PC-3 (cell line): ENCODE measurements at regions of chrX and their contacts with region 1.

Region 1: GRCh38 chrX:95703696-95704095 is 980.9 kb upstream of the DIAPH2 start:
- DNase-seq: no peak
- ATAC-seq: no peak
- H3K4me3 ChIP-seq: no peak overlapping the region
- H3K27ac ChIP-seq: no peak overlapping the region
- H3K4me1 ChIP-seq: no peaks in the 10 kb centered on the region
- H3K27me3 ChIP-seq: no peaks in the 10 kb centered on the region
- CTCF ChIP-seq: no peak

Region 2: DNA sequence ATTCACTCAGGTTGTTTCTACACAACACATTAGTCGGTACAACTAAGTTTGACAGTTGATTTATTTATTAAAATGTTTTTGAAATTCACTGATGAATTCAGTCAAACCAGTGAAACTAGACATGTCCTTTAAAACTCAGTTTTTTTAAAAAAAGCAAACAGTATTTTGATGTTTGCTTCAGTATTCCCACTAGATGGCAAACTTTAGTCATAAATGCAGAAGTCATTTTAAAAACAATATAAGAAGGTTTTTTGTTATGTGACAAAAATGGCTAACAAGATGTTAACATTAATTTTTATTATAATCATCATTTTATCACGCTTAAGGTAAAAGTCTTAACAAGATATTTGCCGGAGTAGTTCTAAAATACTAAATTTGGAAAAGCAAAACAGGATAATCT is 356.8 kb before region 1 on chrX:
- CTCF ChIA-PET with region 1: no interaction called
- POLR2A ChIA-PET with region 1: no interaction called
- intact Hi-C with region 1: loop called (anchors 10 kb)
- DNase-seq: peak; percentile 17
- ATAC-seq: no peak
- H3K4me3 ChIP-seq: no peak overlapping the region
- H3K27ac ChIP-seq: no peak overlapping the region
- H3K4me1 ChIP-seq: no peaks in the 10 kb centered on the region
- H3K27me3 ChIP-seq: no peaks in the 10 kb centered on the region
- CTCF ChIP-seq: peak; percentile 56

Region 3: DNA sequence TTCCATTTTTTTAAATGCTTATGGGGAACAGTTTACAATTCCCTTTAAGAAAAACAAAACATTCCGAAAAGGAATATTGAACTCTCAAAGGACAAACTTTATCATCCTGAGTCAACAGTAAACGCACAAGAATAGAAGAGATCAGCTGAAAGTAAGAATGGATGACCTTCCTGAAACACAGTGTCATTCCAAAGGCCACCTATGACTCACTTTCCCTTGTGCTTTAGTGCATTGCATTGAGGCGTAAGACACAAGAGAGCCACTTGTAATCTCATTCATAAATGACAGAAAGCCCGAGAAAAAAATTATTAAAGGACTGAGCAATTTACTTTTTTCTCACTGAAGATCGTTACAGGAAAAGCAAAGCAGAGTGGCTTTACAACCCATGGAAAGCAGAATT is 81.5 kb before region 1 on chrX:
- CTCF ChIA-PET with region 1: no interaction called
- POLR2A ChIA-PET with region 1: no interaction called
- intact Hi-C with region 1: no loop called
- DNase-seq: no peak
- ATAC-seq: no peak
- H3K4me3 ChIP-seq: no peak overlapping the region
- H3K27ac ChIP-seq: no peak overlapping the region
- H3K4me1 ChIP-seq: no peaks in the 10 kb centered on the region
- H3K27me3 ChIP-seq: no peaks in the 10 kb centered on the region
- CTCF ChIP-seq: no peak

Region 4: DNA sequence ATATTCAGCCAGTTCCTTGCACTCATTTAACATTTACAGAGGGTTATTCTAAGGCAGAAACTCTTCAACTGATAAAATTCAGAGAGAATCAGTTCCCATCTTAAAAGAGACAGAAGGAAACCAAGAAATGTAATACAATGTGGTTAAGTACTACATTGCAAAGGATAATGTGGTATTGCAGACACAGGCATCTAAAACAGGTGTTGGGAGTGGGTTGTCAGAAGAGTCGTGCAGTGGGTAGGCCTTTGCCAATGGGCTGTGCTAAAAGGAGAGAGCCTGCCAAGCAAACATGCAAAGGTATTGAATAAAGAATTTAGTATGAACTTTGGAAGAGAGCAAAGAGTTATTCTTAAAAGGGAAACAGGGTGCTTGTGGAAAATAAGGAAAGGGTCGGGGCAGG is 63.5 kb before region 1 on chrX:
- CTCF ChIA-PET with region 1: no interaction called
- POLR2A ChIA-PET with region 1: no interaction called
- intact Hi-C with region 1: no loop called
- DNase-seq: no peak
- ATAC-seq: no peak
- H3K4me3 ChIP-seq: no peak overlapping the region
- H3K27ac ChIP-seq: no peak overlapping the region
- H3K4me1 ChIP-seq: no peaks in the 10 kb centered on the region
- H3K27me3 ChIP-seq: no peaks in the 10 kb centered on the region
- CTCF ChIP-seq: no peak

Region 5: GRCh38 chrX:95823796-95824195 is 120.1 kb after region 1 on chrX:
- CTCF ChIA-PET with region 1: no interaction called
- POLR2A ChIA-PET with region 1: no interaction called
- intact Hi-C with region 1: no loop called
- DNase-seq: no peak
- ATAC-seq: no peak
- H3K4me3 ChIP-seq: no peak overlapping the region
- H3K27ac ChIP-seq: no peak overlapping the region
- H3K4me1 ChIP-seq: no peaks in the 10 kb centered on the region
- H3K27me3 ChIP-seq: no peaks in the 10 kb centered on the region
- CTCF ChIP-seq: no peak; the same call in 1 of the 2 replicates